CD4-positive, alpha-beta T cell (primary cell): ENCODE measurements at regions of chr3 and their contacts with region 1.

Region 1: DNA sequence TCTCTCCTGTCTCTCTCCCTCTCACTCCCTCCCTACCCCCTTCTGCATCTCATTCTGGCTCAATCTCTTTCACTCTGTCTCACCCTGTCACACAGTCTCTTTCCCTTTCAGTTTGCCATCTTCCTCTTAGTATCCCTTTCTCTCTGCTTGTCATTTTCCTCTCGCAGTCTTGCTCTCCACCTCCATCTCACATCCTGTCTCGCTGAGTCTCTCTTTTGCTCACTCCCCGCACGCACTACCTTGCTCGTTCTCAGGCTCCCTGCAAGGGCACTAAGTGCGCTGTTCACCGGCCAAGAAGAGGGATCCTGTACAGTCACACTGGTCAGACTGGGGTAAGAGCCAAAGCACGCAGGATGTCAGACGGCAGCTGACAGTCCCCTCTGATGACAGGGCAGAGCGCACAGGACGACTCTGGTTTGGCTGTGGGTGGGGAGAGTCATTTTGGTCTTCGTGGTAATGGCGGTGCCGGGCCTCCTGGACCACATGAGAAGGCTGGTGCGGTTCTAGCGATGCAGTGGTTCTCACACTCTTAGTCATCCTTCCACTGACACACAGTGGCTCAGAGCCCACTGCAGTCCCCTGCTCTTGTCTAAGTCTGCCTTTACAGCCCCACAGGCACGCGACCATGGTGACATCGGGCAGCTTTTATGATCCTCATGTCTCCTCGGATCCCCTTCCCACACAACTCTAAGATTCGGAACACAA is 356.8 kb downstream of the FOXP1 start:
- DNase-seq: peak; percentile 52 to 87 (median 72)
- ATAC-seq: peak; percentile 71
- H3K4me3 ChIP-seq: peak overlapping the region; percentile 55
- H3K4me3 Mint-ChIP-seq: peak overlapping the region; percentile 69
- H3K27ac ChIP-seq: peak overlapping the region; percentile 59 to 68
- H3K27ac Mint-ChIP-seq: peak overlapping the region; percentile 87
- H3K4me1 ChIP-seq: peaks cover 24% of the 10 kb centered on the region
- H3K4me1 Mint-ChIP-seq: peaks cover 85% of the 10 kb centered on the region
- H3K27me3 ChIP-seq: no peaks in the 10 kb centered on the region
- H3K27me3 Mint-ChIP-seq: no peaks in the 10 kb centered on the region
- CTCF ChIP-seq: no peak

Region 2: GRCh38 chr3:71102111-71102983 is 124.4 kb before region 1 on chr3:
- CTCF ChIA-PET with region 1: no interaction called
- POLR2A ChIA-PET with region 1: no interaction called
- intact Hi-C with region 1: no loop called
- DNase-seq: no peak
- ATAC-seq: no peak
- H3K4me3 ChIP-seq: no peak overlapping the region
- H3K4me3 Mint-ChIP-seq: peak overlapping the region; percentile 28
- H3K27ac ChIP-seq: no peak overlapping the region
- H3K27ac Mint-ChIP-seq: peak overlapping the region; percentile 83
- H3K4me1 ChIP-seq: peaks cover 49% of the 10 kb centered on the region
- H3K4me1 Mint-ChIP-seq: peaks cover 94% of the 10 kb centered on the region
- H3K27me3 ChIP-seq: no peaks in the 10 kb centered on the region
- H3K27me3 Mint-ChIP-seq: no peaks in the 10 kb centered on the region
- CTCF ChIP-seq: no peak

Region 3: DNA sequence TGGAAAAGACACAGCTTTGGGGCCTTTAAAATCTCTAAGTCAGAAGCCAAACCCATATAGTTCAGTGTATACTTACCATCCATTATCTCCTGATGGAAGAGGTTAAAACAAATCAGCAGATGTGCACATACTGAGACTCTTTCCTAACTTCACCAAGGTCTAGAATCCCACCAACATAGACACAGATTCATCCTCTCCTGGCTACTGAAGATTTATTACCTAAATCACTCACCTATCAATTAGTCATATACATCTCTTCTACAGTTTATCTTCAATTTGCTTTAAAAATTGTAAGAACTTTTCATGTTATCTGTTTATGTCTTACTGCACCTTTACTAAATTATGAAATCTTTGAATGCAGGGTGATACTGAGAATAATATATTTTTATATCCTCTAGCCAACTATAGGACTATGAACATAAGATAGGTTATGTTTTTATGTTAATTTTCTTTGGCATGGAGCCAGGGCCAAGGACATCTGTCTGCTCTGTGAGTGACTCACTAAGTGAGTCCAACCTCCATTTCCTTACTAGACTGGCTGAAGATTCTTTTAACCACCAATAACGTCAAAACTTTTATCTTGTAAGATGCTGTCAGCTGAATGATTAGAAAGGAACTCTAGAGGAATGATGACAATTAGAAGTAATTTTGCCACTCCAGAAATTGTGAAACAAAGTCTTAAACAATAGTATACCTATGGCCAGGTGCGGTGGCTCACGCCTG is 40.8 kb before region 1 on chr3:
- CTCF ChIA-PET with region 1: no interaction called
- POLR2A ChIA-PET with region 1: no interaction called
- intact Hi-C with region 1: loop called in 1 of 2 experiments (anchors 5 kb)
- DNase-seq: peak in 10 of 14 experiments; percentile 9 to 67 (median 32)
- ATAC-seq: peak; percentile 83
- H3K4me3 ChIP-seq: no peak overlapping the region
- H3K4me3 Mint-ChIP-seq: no peak overlapping the region
- H3K27ac ChIP-seq: peak overlapping the region in 1 of 2 donors; percentile 16
- H3K27ac Mint-ChIP-seq: peak overlapping the region; percentile 75
- H3K4me1 ChIP-seq: no peaks in the 10 kb centered on the region
- H3K4me1 Mint-ChIP-seq: peaks cover 47% of the 10 kb centered on the region
- H3K27me3 ChIP-seq: no peaks in the 10 kb centered on the region
- H3K27me3 Mint-ChIP-seq: no peaks in the 10 kb centered on the region
- CTCF ChIP-seq: no peak

Region 4: GRCh38 chr3:72177083-72178050 is 950.6 kb after region 1 on chr3:
- CTCF ChIA-PET with region 1: no interaction called
- POLR2A ChIA-PET with region 1: no interaction called
- intact Hi-C with region 1: no loop called
- DNase-seq: peak in 2 of 14 experiments; percentile 19 to 20
- ATAC-seq: no peak
- H3K4me3 ChIP-seq: no peak overlapping the region
- H3K4me3 Mint-ChIP-seq: peak overlapping the region; percentile 40
- H3K27ac ChIP-seq: no peak overlapping the region
- H3K27ac Mint-ChIP-seq: no peak overlapping the region
- H3K4me1 ChIP-seq: peaks cover 15% of the 10 kb centered on the region
- H3K4me1 Mint-ChIP-seq: peaks cover 15% of the 10 kb centered on the region
- H3K27me3 ChIP-seq: peaks cover 7 to 10% of the 10 kb centered on the region in 2 experiments
- H3K27me3 Mint-ChIP-seq: peaks cover 33% of the 10 kb centered on the region
- CTCF ChIP-seq: no peak